ENCODE measurements at regions of chr4 and their contacts with region 1.

Region 1: DNA sequence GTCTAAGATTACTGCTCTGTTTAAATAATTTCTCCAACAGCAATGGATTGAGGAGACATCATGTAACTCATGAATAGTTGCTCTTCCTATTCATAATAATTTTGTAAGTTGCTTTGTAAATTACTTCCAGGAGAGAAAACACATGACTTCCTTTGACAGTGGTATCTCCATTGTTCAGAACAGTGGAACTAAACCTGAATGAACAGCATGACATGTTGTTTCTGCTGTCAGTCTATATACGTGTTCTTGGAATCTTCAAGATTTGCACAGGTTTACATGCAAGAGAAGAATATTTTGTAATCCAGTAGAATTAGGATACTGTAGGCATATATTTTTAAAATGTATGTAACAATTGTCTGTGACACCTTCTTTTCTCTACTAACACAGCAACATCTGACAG is 618.8 kb upstream of the GRID2 start:
- DNase-seq: no peak
- H3K4me3 ChIP-seq: no peak overlapping the region
- H3K27ac ChIP-seq: no peak overlapping the region
- H3K4me1 ChIP-seq: no peaks in the 10 kb centered on the region
- H3K27me3 ChIP-seq: no peaks in the 10 kb centered on the region
- CTCF ChIP-seq: no peak
- POLR2A ChIP-seq: no peak

Region 2: DNA sequence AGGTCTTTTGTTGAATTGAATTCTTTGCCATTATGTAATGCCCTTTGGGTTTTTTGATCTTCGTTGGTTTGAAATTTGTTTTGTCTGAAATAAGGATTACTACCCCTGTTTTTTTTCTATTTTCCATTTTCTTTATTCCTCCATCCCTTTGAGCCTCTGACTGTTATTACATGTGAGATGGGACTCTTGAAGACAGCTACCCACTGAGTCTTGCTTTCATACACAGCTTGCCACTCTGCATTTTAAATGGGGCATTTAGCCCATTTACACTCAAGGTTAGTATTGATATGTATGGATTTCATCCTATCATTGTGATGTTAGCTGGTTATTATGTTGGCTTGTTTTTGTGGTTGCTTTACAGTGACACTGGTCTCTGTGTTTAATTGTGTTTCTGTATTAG is 117.4 kb before region 1 on chr4:
- intact Hi-C with region 1: loop called (anchors 5 kb)
- DNase-seq: no peak
- H3K4me3 ChIP-seq: no peak overlapping the region
- H3K27ac ChIP-seq: no peak overlapping the region
- H3K4me1 ChIP-seq: no peaks in the 10 kb centered on the region
- H3K27me3 ChIP-seq: no peaks in the 10 kb centered on the region
- CTCF ChIP-seq: no peak
- POLR2A ChIP-seq: no peak

Measured in uterus (tissue), 4 donors.